CD14-positive monocyte (primary cell): ENCODE measurements at regions of chr3 and their contacts with region 1.

Region 1: GRCh38 chr3:167380004-167380689 is at the start of gene ZBBX:
- DNase-seq: peak; percentile 78 to 87 (median 82)
- H3K4me3 ChIP-seq: peak within 1 kb of the TSS in 2 of 3 experiments; percentile 13 to 72
- H3K4me3 Mint-ChIP-seq: peak within 1 kb of the TSS; percentile 79 to 94
- H3K27ac ChIP-seq: no peak within 1 kb of the TSS
- H3K27ac Mint-ChIP-seq: peak within 1 kb of the TSS in 5 of 7 donors; percentile 59 to 89 (median 73)
- H3K4me1 ChIP-seq: peaks cover 7% of the 10 kb centered on the region in 2 donors
- H3K4me1 Mint-ChIP-seq: peaks cover 8% of the 10 kb centered on the region
- H3K27me3 ChIP-seq: peaks cover 3 to 8% of the 10 kb centered on the region in 2 donors
- H3K27me3 Mint-ChIP-seq: peaks cover 3 to 15% (median 5%) of the 10 kb centered on the region in 3 donors
- CTCF ChIP-seq: peak; percentile 94
- polyA plus RNA-seq, gene ZBBX: not detected

Region 2: GRCh38 chr3:167684388-167684993 is 304.3 kb after region 1 on chr3:
- intact Hi-C with region 1: loop called in 1 of 2 experiments (anchors 5 kb)
- DNase-seq: peak; percentile 36 to 74 (median 59)
- H3K4me3 ChIP-seq: no peak overlapping the region
- H3K4me3 Mint-ChIP-seq: no peak overlapping the region
- H3K27ac ChIP-seq: no peak overlapping the region
- H3K27ac Mint-ChIP-seq: no peak overlapping the region
- H3K4me1 ChIP-seq: no peaks in the 10 kb centered on the region
- H3K4me1 Mint-ChIP-seq: no peaks in the 10 kb centered on the region
- H3K27me3 ChIP-seq: no peaks in the 10 kb centered on the region
- H3K27me3 Mint-ChIP-seq: no peaks in the 10 kb centered on the region
- CTCF ChIP-seq: peak; percentile 83